Activated CD4-positive, alpha-beta T cell treated with anti-CD3 and anti-CD28 coated beads, Interleukin-2, amount 10 ng/mL, durations not matched to agents 24 days and 14 days (primary cell): ENCODE measurements at regions of chr4 and their contacts with region 1.

Region 1: DNA sequence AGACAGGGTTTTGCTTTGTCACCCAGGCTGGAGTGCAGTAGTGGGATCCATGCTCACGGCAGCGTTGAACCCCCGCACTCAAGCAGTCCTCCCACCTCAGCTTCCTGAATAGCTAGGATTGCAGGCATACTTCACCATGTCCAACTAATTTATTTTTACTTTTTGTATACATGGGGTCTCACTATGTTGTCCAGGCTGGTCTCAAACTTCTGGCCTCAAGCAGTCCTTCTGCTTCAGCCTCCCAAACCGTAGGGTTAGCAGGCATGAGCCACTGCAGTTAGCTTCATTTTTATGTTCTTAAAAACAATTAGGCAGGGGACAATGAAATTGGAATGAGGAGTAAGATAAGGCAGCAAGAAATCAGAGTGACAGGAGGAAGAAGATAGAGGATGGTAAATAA is 50.5 kb downstream of the RAP1GDS1 start:
- DNase-seq: no peak
- H3K4me3 Mint-ChIP-seq: no peak overlapping the region
- H3K27ac Mint-ChIP-seq: no peak overlapping the region
- H3K4me1 Mint-ChIP-seq: no peaks in the 10 kb centered on the region
- H3K27me3 Mint-ChIP-seq: no peaks in the 10 kb centered on the region

Region 2: DNA sequence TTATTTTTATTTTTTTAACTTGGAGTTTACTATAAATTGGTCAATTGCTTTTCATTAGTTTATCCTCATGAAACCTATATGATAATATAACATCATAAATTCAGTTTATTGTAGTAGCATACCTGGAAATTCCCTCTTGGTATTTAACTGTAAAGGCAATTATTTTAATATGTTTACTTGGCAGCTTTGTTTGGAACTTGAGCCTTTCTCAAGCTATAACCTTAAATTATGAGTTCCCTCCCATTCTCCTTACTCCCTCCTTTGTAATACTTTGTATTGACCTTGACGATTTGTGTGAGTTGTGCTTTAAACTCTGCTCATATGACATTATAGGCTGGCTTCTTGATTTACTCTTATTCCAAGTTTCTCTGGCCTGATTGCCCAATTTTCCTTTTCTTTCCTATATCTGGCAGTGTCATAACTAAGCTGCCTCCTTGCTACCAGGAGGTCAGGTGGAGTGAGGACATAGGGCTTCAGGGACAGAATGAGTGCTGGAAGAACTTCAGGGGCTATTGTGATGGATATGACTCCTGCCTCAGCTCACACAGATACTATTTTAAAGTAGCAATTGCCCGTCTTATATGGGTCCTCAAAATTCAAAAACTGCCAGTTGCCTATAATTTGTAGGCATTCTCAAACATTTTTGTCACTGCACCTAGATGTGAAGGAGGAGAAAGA is 27.2 kb after region 1 on chr4:
- intact Hi-C with region 1: loop called (anchors 2 kb)
- DNase-seq: no peak
- H3K4me3 Mint-ChIP-seq: no peak overlapping the region
- H3K27ac Mint-ChIP-seq: no peak overlapping the region
- H3K4me1 Mint-ChIP-seq: no peaks in the 10 kb centered on the region
- H3K27me3 Mint-ChIP-seq: no peaks in the 10 kb centered on the region